Aorta (tissue), 5 donors: ENCODE measurements at regions of chr13 and their contacts with region 1.

Region 1: DNA sequence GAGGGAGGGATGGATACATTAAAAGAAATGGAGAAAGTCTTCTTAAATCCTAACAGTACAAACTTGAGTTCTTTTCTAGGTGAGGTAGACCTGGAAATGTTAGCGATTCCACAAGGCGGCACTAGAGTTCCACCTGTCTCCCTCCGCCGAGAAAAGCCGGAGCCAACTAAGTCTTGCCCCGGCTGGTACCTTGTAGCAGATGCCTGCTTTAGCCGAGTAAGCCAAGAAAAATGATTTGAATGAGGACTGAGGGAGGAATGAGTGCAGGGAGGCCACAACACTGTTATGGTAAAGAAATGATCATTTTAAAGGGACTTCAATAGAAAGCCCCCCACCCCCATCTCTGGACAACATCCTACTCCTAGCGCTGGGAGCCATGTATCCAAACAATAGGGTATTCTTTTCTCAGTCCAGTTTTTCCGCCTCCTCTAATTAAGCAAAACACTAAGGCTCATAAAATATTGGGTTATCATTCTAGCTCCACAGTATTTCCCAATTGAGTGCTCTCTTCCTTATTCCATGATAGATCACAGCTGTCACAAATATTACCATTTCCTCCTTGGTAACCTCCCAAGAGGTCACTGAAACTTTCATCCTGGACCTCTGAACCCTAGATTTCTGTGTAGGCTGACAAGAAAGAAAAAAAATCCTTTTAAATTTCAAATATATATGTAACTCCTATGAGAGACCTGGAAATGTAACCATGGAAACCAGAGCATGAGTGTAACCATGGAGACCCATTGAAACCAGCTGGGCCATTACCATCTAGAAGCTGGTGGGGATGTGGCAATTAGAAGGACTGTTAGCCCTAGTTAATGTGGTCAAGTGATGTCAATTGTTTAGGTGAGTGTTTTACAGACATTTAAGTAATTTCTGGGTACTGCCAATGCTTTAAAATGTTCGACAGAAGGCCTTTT is 58.3 kb downstream of the GPALPP1 start:
- DNase-seq: peak; percentile 81 to 84
- ATAC-seq: peak; percentile 91
- H3K4me3 ChIP-seq: peak overlapping the region in 1 of 2 donors; percentile 40
- H3K27ac ChIP-seq: no peak overlapping the region
- H3K4me1 ChIP-seq: no peaks in the 10 kb centered on the region
- H3K27me3 ChIP-seq: no peaks in the 10 kb centered on the region

Region 2: DNA sequence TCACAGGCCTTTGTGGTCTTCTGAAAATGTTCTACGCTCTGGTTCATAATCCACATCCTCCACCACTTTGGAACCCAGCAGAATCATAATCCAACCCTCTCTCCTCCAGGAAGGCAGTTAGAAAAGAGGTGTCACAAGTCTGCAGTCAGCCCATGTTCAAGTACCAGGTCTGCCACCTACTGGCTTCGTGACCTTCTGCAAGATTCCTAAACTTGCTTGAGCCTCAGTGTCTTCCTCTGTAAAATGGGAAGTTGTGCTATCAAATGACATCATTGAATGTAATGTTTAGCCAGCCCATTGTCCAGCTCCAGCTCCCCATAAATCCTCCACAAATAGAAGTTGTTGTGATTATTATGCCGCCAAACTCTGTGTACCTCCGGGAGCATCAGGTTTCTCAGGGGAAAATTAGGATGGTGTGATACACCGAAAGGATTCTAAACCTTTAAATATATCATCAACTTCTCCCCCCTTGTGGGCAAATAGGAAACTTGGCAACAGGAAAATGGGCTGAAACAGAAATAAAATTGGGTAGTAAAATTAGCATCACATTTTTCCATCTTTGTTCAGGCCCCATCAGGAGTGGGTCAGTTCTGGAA is 168.1 kb before region 1 on chr13:
- intact Hi-C with region 1: no loop called
- DNase-seq: no peak
- ATAC-seq: no peak
- H3K4me3 ChIP-seq: no peak overlapping the region
- H3K27ac ChIP-seq: no peak overlapping the region
- H3K4me1 ChIP-seq: no peaks in the 10 kb centered on the region
- H3K27me3 ChIP-seq: no peaks in the 10 kb centered on the region

Region 3: GRCh38 chr13:45004096-45004495 is 43.6 kb before region 1 on chr13:
- intact Hi-C with region 1: no loop called
- DNase-seq: no peak
- ATAC-seq: no peak
- H3K4me3 ChIP-seq: no peak overlapping the region
- H3K27ac ChIP-seq: no peak overlapping the region
- H3K4me1 ChIP-seq: no peaks in the 10 kb centered on the region
- H3K27me3 ChIP-seq: no peaks in the 10 kb centered on the region

Region 4: DNA sequence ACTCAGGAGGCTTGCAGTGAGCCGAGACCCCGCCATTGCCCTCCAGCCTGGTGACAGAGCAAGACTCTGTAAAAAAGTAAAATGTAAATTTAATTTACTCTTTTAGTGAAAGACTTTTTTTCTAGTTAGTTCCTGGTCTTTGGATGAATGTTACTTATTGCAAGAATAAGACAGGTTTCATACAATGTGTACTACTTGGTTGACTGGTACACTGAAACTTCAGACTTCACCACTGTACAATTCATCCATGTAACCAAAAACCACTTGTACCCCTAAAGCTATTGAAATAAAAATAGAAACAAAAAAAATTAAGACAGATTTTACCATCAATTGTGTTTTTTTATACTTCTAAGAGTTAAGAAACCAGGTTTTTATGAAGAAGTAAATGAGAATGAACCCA is 22.8 kb before region 1 on chr13:
- intact Hi-C with region 1: no loop called
- DNase-seq: no peak
- ATAC-seq: no peak
- H3K4me3 ChIP-seq: no peak overlapping the region
- H3K27ac ChIP-seq: no peak overlapping the region
- H3K4me1 ChIP-seq: no peaks in the 10 kb centered on the region
- H3K27me3 ChIP-seq: no peaks in the 10 kb centered on the region

Region 5: DNA sequence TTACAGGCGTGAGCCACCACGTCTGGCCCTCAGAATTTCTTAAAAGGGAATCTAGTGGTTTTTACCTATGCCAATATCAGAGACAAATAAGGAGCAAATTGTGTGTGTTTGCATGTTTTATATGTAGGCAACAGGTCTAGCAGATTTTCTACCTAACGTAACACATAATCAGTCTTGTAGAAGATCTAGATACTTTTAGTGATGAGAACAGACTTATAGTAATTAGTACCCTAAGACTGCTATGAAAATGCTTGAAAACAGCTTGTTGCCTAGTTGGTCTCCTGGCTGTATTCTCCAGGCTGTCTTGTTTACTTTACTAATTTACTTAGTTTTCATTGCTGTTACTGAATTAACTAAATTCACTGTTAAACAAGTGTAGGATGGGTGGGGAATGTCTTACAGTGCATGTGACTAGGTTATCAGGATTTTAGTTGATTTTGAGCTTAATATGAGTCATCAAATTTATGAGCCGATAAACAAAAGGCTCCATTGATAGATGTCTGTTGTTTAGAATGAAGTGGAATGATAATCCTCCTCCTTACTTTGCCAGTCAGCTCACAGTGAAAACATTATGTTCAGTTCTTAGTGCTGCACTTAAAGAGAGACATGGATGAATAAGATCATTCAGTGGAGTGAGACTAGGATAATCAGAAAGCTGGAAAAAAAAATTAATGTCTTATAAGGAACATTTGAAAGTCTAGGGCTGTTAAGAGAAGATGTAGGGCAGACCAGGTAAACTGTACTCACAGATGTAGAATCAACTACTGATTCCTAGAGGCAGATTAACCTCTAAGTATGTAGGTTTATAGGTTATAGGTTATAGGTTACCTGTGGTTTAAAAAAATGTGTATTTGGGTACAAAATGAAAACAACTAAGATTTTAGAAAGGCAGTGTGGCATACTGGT is 95.0 kb after region 1 on chr13:
- intact Hi-C with region 1: no loop called
- DNase-seq: no peak
- ATAC-seq: no peak
- H3K4me3 ChIP-seq: no peak overlapping the region
- H3K27ac ChIP-seq: no peak overlapping the region
- H3K4me1 ChIP-seq: no peaks in the 10 kb centered on the region
- H3K27me3 ChIP-seq: no peaks in the 10 kb centered on the region

Region 6: DNA sequence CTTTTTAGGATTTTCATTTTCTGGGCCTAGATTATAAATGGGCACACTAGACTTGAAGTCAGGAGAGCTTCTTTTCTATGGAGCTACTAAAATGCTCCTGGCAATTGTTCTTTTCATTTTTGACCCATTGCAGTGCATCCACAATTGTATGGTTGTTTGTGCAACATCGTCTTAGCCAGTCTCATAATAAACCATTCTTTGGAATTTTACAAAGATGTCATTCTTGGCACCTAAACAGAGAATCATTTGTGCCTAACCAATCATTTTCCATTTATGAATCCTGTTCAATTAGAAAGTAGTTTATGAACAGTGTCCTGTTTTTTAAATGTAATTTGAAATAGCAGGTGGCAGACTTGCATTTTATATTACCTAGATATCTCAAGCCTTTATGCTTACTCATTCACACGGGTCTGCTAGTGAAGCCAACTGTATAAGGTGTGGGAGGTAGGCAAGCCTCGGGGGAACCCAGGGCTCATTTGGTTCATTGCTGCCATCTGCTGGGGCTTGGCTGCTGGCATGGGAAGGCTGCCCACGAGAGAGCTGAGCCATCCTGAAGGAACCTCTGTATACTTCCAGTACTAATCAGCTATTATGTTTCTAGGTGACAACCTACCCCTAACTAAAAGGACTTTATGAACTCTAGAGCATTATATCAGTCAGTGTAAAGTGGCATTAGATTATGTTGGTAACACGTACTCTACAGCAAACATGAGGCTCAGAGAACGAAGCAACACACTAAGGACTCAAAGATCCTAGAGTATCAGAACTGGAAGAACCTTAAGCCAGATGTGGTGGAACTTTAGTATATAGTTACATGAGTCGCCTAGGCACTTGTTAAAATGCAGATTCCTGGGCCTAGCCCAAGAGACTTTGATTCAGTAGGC is 233.3 kb after region 1 on chr13:
- intact Hi-C with region 1: loop called (anchors 2 kb)
- DNase-seq: peak; percentile 71 to 83
- ATAC-seq: peak; percentile 74
- H3K4me3 ChIP-seq: no peak overlapping the region
- H3K27ac ChIP-seq: no peak overlapping the region
- H3K4me1 ChIP-seq: no peaks in the 10 kb centered on the region
- H3K27me3 ChIP-seq: no peaks in the 10 kb centered on the region

Region 7: GRCh38 chr13:45310341-45311125 is 262.9 kb after region 1 on chr13:
- intact Hi-C with region 1: loop called (anchors 2 to 5 kb)
- DNase-seq: no peak
- ATAC-seq: no peak
- H3K4me3 ChIP-seq: peak overlapping the region; percentile 11 to 32
- H3K27ac ChIP-seq: no peak overlapping the region
- H3K4me1 ChIP-seq: no peaks in the 10 kb centered on the region
- H3K27me3 ChIP-seq: no peaks in the 10 kb centered on the region